A549 (cell line): ENCODE measurements at regions of chr2 and their contacts with region 1.

Region 1: GRCh38 chr2:73268830-73269685 is 15.2 kb downstream of the FBXO41 start:
- DNase-seq: peak; percentile 82 to 83
- ATAC-seq: peak; percentile 79 to 80
- H3K4me3 ChIP-seq: peak overlapping the region; percentile 43
- H3K27ac ChIP-seq: peak overlapping the region; percentile 66 to 82
- H3K4me1 ChIP-seq: peaks cover 7% of the 10 kb centered on the region; the same call in 1 of the 3 replicates
- CTCF ChIP-seq: peak; percentile 36; the same call in 2 of the 3 replicates
- EP300 ChIP-seq: no peak
- POLR2A ChIP-seq: no peak; the same call in none of the 2 replicates
- RAD21 ChIP-seq: no peak

Region 2: GRCh38 chr2:73283545-73284295 is 14.7 kb after region 1 on chr2:
- CTCF ChIA-PET with region 1: interaction called, 42 read pairs
- POLR2A ChIA-PET with region 1: no interaction called
- DNase-seq: no peak
- ATAC-seq: peak; percentile 36 to 70
- H3K4me3 ChIP-seq: peak overlapping the region; percentile 77
- H3K27ac ChIP-seq: peak overlapping the region; percentile 78 to 90
- H3K4me1 ChIP-seq: peaks cover 12% of the 10 kb centered on the region; the same call in 1 of the 3 replicates
- CTCF ChIP-seq: no peak
- EP300 ChIP-seq: no peak
- POLR2A ChIP-seq: no peak
- RAD21 ChIP-seq: no peak

Region 3: GRCh38 chr2:73333564-73333963 is 64.5 kb after region 1 on chr2:
- CTCF ChIA-PET with region 1: no interaction called
- POLR2A ChIA-PET with region 1: no interaction called
- DNase-seq: no peak
- ATAC-seq: no peak
- H3K4me3 ChIP-seq: no peak overlapping the region
- H3K27ac ChIP-seq: no peak overlapping the region
- H3K4me1 ChIP-seq: no peaks in the 10 kb centered on the region
- CTCF ChIP-seq: no peak
- EP300 ChIP-seq: no peak
- POLR2A ChIP-seq: no peak
- RAD21 ChIP-seq: no peak

Region 4: DNA sequence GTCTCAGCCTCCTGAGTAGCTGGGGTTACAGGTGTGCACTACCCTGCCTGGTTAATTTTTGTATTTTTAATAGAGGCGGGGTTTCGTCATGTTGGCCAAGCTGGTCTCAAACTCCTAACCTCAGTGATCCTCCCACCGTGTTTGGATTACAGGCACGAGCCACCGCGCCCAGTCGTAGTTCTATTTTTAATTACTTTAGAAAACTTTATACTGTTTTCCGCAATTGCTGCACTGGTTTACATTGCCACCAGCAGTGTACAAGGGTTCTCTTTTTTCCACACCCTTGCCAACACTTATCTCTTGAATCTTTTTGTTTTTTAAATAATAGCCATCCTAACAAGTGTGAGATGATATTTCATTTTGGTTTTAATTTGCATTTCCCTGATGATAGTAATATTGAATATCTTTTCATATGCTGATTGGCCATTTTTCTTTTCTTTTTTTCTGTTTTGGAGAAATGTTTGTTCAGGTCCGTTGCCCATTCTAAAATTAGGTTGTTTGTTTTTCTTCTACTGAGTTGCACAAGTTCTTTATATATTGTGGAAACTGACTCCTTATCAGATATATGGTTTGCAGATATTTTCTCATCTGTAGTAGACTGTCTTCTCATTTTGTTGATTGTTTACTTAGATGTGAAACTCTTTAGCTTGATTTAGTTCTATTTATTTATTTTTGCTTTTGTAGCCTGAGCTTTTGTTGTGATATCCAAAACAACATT is 133.5 kb after region 1 on chr2:
- CTCF ChIA-PET with region 1: no interaction called
- POLR2A ChIA-PET with region 1: no interaction called
- DNase-seq: no peak
- ATAC-seq: no peak
- H3K4me3 ChIP-seq: no peak overlapping the region
- H3K27ac ChIP-seq: no peak overlapping the region
- H3K4me1 ChIP-seq: no peaks in the 10 kb centered on the region
- CTCF ChIP-seq: no peak
- EP300 ChIP-seq: no peak
- POLR2A ChIP-seq: no peak
- RAD21 ChIP-seq: no peak

Region 5: GRCh38 chr2:73730810-73731209 is 461.8 kb after region 1 on chr2:
- CTCF ChIA-PET with region 1: no interaction called
- POLR2A ChIA-PET with region 1: no interaction called
- DNase-seq: no peak
- ATAC-seq: no peak
- H3K4me3 ChIP-seq: no peak overlapping the region
- H3K27ac ChIP-seq: no peak overlapping the region
- H3K4me1 ChIP-seq: peaks cover 4% of the 10 kb centered on the region
- CTCF ChIP-seq: no peak
- EP300 ChIP-seq: no peak
- POLR2A ChIP-seq: no peak
- RAD21 ChIP-seq: no peak